Heart right ventricle (tissue), 16 donors: ENCODE measurements at regions of chr9 and their contacts with region 1.

Region 1: GRCh38 chr9:18632632-18633403 is 158.9 kb downstream of the ADAMTSL1 start:
- DNase-seq: peak; percentile 15 to 41
- ATAC-seq: peak; percentile 80 to 95 (median 94)
- H3K4me3 ChIP-seq: no peak overlapping the region
- H3K27ac ChIP-seq: peak overlapping the region; percentile 12 to 80 (median 72)
- H3K4me1 ChIP-seq: peaks cover 0 to 51% (median 11%) of the 10 kb centered on the region in 9 donors
- H3K27me3 ChIP-seq: no peaks in the 10 kb centered on the region
- CTCF ChIP-seq: no peak

Region 2: GRCh38 chr9:18605766-18606180 is 27.0 kb before region 1 on chr9:
- intact Hi-C with region 1: loop called in 1 of 10 experiments (anchors 2 kb)
- DNase-seq: peak; percentile 23 to 54
- ATAC-seq: peak; percentile 56 to 85 (median 68)
- H3K4me3 ChIP-seq: no peak overlapping the region
- H3K27ac ChIP-seq: peak overlapping the region in 3 of 10 donors; percentile 32 to 68 (median 53)
- H3K4me1 ChIP-seq: peaks cover 0 to 32% (median 12%) of the 10 kb centered on the region in 9 donors
- H3K27me3 ChIP-seq: no peaks in the 10 kb centered on the region
- CTCF ChIP-seq: no peak